ENCODE measurements at regions of chr2 and their contacts with region 1.

Region 1: DNA sequence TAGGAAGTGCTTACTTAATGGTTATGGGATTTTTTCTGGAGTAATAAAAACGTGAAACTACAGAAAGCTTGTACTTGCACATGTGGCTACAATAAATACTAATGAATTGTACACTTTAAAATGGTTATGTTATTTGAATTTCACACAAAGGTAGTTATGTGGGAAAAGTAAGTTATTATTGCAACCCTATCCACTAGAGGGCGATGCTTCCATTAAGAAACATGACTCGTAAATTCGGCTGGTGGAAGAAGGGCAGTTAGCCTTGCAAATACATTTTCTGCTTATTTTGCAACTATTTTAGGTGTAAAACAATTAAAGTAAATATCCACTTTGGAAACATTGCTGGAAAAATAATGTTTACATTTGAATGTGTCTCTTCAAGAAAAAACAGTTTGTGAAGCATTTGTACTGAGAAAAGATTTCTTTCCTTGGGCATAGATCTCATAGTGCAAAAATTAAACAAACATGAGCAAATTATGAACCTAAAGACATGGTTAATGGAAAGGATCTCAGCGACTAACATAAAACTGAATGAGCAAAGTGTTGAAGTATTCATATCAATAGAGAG is 68.1 kb upstream of the CSRNP3 start:
- DNase-seq: no peak
- H3K4me3 ChIP-seq: no peak overlapping the region
- H3K27ac ChIP-seq: no peak overlapping the region
- H3K4me1 ChIP-seq: no peaks in the 10 kb centered on the region
- H3K27me3 ChIP-seq: peaks cover 12% of the 10 kb centered on the region
- CTCF ChIP-seq: peak; percentile 77

Region 2: DNA sequence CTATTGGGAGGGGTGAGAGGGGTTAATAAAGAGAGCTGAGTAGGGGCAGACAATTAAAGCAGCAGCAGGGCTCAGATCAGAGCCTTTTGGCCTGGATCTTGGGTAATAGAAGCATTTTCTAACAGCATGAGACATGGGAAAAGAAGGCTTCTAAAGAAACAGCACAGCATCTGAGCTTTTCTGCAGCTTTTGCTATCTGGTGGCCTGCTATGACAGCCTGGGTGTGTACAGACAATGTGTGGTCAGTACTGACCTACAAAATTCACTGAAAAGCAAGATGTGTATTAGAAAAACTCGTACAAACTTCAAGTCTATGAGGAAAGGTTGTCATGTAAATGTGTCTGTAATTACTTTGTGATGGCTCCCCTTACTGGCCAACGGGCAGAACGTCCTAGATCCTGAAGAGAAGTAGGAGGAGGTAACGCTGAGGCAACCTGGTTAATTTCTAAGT is 297.1 kb after region 1 on chr2:
- intact Hi-C with region 1: loop called (anchors 5 kb)
- DNase-seq: no peak
- H3K4me3 ChIP-seq: no peak overlapping the region
- H3K27ac ChIP-seq: no peak overlapping the region
- H3K4me1 ChIP-seq: peaks cover 4% of the 10 kb centered on the region
- H3K27me3 ChIP-seq: peaks cover 6% of the 10 kb centered on the region
- CTCF ChIP-seq: peak; percentile 60

Region 3: DNA sequence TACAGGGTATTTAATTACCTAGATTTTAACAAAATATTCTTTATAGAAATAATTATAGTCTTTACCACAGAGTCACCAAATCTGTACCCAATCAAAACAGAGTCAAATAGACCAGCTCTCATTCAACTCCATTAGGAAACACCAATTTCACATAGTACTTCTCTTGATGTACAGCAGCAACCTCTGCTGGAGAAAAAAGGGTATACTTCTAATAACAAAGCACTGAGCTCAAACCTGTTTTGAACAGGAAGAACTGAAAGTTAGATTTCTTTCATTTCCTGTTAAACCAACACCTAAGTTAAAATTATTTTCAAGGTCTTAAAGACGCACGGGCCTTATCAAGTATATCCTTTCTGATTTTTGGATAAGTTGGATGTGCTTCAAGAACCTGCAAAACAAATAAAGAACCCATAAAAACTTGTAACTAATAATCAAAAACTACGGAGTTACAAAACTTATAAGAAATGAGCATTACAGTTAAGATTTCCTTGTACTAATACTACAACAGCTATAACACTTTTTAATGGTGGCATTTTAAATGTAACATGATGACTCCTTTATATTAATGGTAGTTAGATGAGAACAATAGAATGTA is 473.2 kb after region 1 on chr2:
- intact Hi-C with region 1: loop called (anchors 10 kb)
- DNase-seq: no peak
- H3K4me3 ChIP-seq: no peak overlapping the region
- H3K27ac ChIP-seq: no peak overlapping the region
- H3K4me1 ChIP-seq: no peaks in the 10 kb centered on the region
- H3K27me3 ChIP-seq: no peaks in the 10 kb centered on the region
- CTCF ChIP-seq: peak; percentile 67

Measured in left ventricle myocardium inferior (tissue), 1 donor.